AG04449 (cell line): ENCODE measurements at regions of chr14 and their contacts with region 1.

Region 1: DNA sequence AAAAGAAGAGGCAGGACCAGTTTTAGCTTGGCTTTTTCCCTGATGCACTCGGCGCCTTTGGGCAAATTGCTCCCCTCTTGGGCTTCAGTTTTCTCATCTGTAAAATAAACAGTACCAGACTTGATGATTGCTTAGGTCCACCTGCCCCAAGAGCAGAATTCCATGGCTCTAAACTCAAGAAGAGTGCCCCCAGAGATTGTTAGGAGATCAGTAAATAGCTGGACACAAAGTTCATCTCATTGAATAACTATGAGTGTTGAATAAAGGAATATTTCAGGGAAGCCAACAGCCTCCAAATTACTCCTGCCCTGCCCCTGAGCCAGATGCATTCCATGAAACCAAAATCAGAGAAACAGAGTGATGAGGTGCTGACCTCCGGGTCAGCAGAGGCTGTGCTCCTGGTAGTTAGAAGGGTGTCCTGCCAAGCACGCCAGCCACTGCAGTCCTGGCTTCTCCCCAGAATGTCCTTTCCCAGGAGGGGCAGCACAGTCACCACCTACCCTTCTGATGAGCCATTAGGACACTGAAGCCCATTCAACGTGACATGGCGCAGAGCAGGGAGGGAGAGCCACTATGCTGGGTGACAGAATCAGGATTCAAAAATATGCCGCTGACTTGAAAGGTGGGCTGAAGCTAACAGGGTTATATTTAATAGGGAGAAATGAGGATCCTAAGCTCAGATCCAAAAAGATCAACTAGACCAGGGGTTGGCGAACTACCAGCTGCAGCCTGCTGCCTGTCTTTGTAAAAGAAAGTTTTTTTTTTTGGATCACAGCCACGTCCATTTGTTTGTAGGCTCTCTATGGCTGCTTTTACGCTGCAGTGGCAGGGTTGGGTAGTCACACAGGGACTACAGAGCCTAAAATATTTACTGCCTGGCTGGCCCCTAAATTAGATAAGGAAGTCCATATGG is 34.4 kb upstream of the PLEK2 start:
- DNase-seq: no peak
- H3K4me3 ChIP-seq: no peak overlapping the region
- CTCF ChIP-seq: no peak

Region 2: DNA sequence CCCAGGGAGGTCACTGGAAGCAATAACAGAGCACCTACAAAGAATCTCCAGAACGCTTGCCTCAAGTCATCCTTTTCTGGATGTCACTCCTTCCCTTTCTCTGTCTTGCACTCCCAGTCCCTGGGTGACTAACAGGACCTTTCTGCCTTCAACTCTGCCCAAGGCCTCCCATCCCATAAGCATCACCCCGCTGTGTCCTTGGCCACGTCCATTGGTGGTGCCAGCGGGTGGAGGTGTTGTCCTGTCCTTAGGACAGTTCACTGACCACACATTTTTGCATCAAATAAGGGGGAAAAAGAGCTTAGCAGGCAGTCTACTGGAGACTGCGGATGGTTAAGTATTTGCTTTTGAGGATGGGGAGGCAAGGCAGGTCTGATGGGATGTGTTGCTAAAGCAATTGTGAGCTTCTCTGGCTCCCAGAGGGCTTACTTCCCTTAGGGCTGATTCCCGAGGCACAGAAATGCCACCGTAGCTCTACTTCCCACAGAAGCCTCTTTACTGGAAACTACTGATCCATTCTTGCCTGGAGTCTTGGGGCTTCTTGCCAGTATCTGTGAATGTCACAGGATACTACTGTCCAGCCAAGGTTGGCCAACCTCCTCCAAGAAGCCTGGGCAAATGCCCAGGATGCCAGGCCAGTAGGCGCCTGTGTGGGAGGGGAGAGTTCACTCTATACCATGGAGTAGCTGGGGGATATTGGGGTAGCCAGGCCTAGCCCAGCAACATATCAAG is 10.6 kb before region 1 on chr14:
- CTCF ChIA-PET with region 1: interaction called, 60 read pairs
- POLR2A ChIA-PET with region 1: no interaction called
- DNase-seq: no peak
- H3K4me3 ChIP-seq: no peak overlapping the region
- CTCF ChIP-seq: no peak